AG04449 (cell line): ENCODE measurements at regions of chr12 and their contacts with region 1.

Region 1: GRCh38 chr12:92987362-92987761 is 58.3 kb upstream of the EEA1 start:
- DNase-seq: peak; percentile 29
- H3K4me3 ChIP-seq: no peak overlapping the region
- CTCF ChIP-seq: no peak

Region 2: GRCh38 chr12:92784795-92785562 is 202.4 kb before region 1 on chr12:
- CTCF ChIA-PET with region 1: interaction called, 15 read pairs
- POLR2A ChIA-PET with region 1: no interaction called
- DNase-seq: peak; percentile 23
- H3K4me3 ChIP-seq: no peak overlapping the region
- CTCF ChIP-seq: peak; percentile 46

Region 3: DNA sequence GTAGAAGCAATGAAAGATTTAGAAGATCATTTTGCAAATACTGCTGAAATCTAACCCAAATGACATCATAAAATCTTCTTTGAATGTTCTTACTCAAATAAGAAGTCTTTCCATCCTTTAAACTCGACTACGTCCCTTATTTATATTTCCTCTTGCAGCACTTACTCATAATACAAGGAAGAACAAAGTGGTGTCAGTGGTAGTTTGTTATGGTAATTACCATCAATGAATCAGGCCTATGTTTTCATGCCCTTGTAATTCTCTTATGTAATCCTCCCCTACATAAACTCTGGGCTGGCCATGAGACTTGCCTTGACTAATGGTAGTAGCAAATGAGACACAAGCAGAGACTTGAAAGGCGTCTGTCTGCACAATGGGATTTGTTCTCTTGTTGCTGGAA is 75.3 kb before region 1 on chr12:
- CTCF ChIA-PET with region 1: no interaction called
- POLR2A ChIA-PET with region 1: no interaction called
- DNase-seq: no peak
- H3K4me3 ChIP-seq: no peak overlapping the region
- CTCF ChIP-seq: no peak

Region 4: GRCh38 chr12:92977326-92977725 is 10.0 kb before region 1 on chr12:
- CTCF ChIA-PET with region 1: interaction called, 37 read pairs
- POLR2A ChIA-PET with region 1: interaction called, 3 read pairs
- DNase-seq: no peak
- H3K4me3 ChIP-seq: no peak overlapping the region
- CTCF ChIP-seq: no peak

Region 5: GRCh38 chr12:93387780-93388179 is 400.4 kb after region 1 on chr12:
- CTCF ChIA-PET with region 1: interaction called, 29 read pairs
- POLR2A ChIA-PET with region 1: no interaction called
- DNase-seq: no peak
- H3K4me3 ChIP-seq: no peak overlapping the region
- CTCF ChIP-seq: no peak

Region 6: GRCh38 chr12:93419388-93420034 is 432.1 kb after region 1 on chr12:
- CTCF ChIA-PET with region 1: interaction called, 106 read pairs
- POLR2A ChIA-PET with region 1: no interaction called
- DNase-seq: no peak
- H3K4me3 ChIP-seq: no peak overlapping the region
- CTCF ChIP-seq: peak; percentile 32